Aorta (tissue), 5 donors: ENCODE measurements at regions of chr12 and their contacts with region 1.

Region 1: GRCh38 chr12:56987551-56988053 is 18.7 kb downstream of the ZBTB39 start:
- DNase-seq: peak; percentile 88 to 95
- ATAC-seq: peak; percentile 84
- H3K4me3 ChIP-seq: no peak overlapping the region
- H3K27ac ChIP-seq: no peak overlapping the region
- H3K4me1 ChIP-seq: no peaks in the 10 kb centered on the region
- H3K27me3 ChIP-seq: no peaks in the 10 kb centered on the region

Region 2: GRCh38 chr12:56751712-56752598 is 235.6 kb before region 1 on chr12 and contains the start of gene PRIM1:
- intact Hi-C with region 1: loop called in 1 of 2 experiments (anchors 1 kb)
- DNase-seq: peak; percentile 90 to 94
- ATAC-seq: peak; percentile 96
- H3K4me3 ChIP-seq: peak within 1 kb of the TSS; percentile 2 to 76
- H3K27ac ChIP-seq: no peak within 1 kb of the TSS
- H3K4me1 ChIP-seq: no peaks in the 10 kb centered on the region
- H3K27me3 ChIP-seq: no peaks in the 10 kb centered on the region
- total RNA-seq, gene PRIM1: 3.2 to 4.6 TPM

Region 3: GRCh38 chr12:56759263-56759908 is 228.2 kb before region 1 on chr12:
- intact Hi-C with region 1: loop called (anchors 1 kb)
- DNase-seq: no peak
- ATAC-seq: no peak
- H3K4me3 ChIP-seq: no peak overlapping the region
- H3K27ac ChIP-seq: no peak overlapping the region
- H3K4me1 ChIP-seq: no peaks in the 10 kb centered on the region
- H3K27me3 ChIP-seq: no peaks in the 10 kb centered on the region

Region 4: GRCh38 chr12:56947633-56948456 is 39.8 kb before region 1 on chr12:
- intact Hi-C with region 1: no loop called
- DNase-seq: no peak
- ATAC-seq: no peak
- H3K4me3 ChIP-seq: no peak overlapping the region
- H3K27ac ChIP-seq: no peak overlapping the region
- H3K4me1 ChIP-seq: no peaks in the 10 kb centered on the region
- H3K27me3 ChIP-seq: no peaks in the 10 kb centered on the region

Region 5: DNA sequence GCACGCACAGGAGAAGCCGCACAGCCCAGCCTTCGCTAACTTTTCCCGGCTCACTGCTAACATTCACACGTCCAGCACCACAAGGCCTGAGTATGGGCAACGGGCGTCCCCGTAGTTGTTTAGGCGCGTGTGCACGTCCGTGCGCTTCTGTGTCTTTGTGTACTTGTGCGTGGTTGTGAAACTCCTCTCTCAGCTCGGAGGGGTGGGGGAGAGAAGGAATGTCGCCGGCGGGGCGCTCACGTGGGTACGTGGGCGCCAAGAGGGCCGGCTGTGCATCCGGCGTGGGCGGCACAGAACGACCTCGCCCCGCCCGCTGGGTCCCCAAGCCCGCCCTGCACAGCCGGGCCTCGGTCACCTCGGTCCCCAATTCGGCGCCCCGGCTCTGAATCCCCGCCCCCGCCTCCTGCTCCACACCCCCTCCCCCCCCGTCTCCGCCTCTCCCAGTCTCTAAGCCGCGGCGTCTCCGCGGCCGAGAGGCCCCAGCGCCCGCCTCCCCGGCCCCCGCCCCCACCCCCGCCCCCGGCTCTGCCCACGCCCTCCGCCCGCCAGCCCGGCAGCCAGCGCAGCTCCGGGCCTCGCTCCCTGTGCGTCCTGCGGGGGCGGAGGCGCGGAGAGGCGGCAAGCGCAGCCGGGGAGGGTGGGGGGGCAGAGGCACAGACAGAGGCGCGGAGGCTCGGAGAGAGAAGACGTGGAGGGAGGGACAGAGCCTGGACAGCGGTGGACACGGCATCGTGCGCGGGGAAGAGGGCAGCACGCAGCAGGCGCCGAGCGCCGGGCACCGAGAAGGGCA is 101.1 kb after region 1 on chr12 and contains the start of gene NAB2:
- intact Hi-C with region 1: no loop called
- DNase-seq: peak; percentile 98
- ATAC-seq: peak; percentile 87
- H3K4me3 ChIP-seq: peak within 1 kb of the TSS; percentile 73 to 92
- H3K27ac ChIP-seq: peak within 1 kb of the TSS; percentile 94
- H3K4me1 ChIP-seq: peaks cover 0 to 6% of the 10 kb centered on the region in 2 donors
- H3K27me3 ChIP-seq: no peaks in the 10 kb centered on the region
- total RNA-seq, gene NAB2: 31.6 to 48.4 TPM